ENCODE measurements at regions of chr13 and their contacts with region 1.

Region 1: GRCh38 chr13:38686577-38687245 is at the start of gene FREM2:
- DNase-seq: no peak
- ATAC-seq: peak; percentile 56
- total RNA-seq, gene FREM2: 0.03 TPM

Region 2: GRCh38 chr13:38630780-38631179 is 55.9 kb before region 1 on chr13:
- intact Hi-C with region 1: no loop called
- DNase-seq: no peak
- ATAC-seq: no peak

Region 3: GRCh38 chr13:38763439-38764381 is 77.0 kb after region 1 on chr13:
- intact Hi-C with region 1: loop called (anchors 2 kb)
- DNase-seq: no peak
- ATAC-seq: no peak

Region 4: GRCh38 chr13:38872693-38873092 is 186.0 kb after region 1 on chr13:
- intact Hi-C with region 1: loop called (anchors 5 kb)
- DNase-seq: no peak
- ATAC-seq: no peak

Measured in Right ventricle myocardium inferior (tissue), 1 donor.